Common myeloid progenitor, CD34-positive (primary cell): ENCODE measurements at regions of chr1 and their contacts with region 1.

Region 1: GRCh38 chr1:16618719-16619118 is 5.4 kb upstream of the NBPF1 start:
- DNase-seq: no peak
- H3K4me3 ChIP-seq: no peak overlapping the region
- H3K27ac ChIP-seq: no peak overlapping the region
- H3K4me1 ChIP-seq: peaks cover 0 to 11% (median 10%) of the 10 kb centered on the region in 4 experiments
- H3K27me3 ChIP-seq: no peaks in the 10 kb centered on the region

Region 2: DNA sequence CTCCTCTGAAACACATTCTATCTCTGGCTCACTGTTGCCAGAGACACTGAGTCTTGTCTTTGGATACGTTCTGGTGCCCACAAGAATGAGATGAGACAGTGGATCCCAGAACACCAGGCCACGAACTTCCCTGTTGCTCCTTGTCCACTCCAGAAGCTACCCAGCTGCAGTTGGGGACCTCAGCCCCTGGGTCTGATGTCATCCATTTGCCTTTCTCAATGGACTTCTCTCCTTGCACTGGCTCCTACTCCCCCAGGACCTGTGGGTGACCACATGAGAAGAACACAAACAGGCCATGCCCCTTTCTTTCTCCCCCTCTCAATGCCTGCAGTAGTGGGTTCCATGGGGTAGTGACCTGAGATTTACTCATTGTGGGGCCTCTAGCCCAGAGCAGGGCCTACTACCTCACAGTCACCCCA is 11.3 kb before region 1 on chr1:
- CTCF ChIA-PET with region 1: interaction called, 104 read pairs
- POLR2A ChIA-PET with region 1: no interaction called
- DNase-seq: no peak
- H3K4me3 ChIP-seq: no peak overlapping the region
- H3K27ac ChIP-seq: no peak overlapping the region
- H3K4me1 ChIP-seq: peaks cover 3 to 6% (median 5%) of the 10 kb centered on the region in 4 experiments
- H3K27me3 ChIP-seq: peaks cover 0 to 7% (median 4%) of the 10 kb centered on the region in 5 experiments

Region 3: DNA sequence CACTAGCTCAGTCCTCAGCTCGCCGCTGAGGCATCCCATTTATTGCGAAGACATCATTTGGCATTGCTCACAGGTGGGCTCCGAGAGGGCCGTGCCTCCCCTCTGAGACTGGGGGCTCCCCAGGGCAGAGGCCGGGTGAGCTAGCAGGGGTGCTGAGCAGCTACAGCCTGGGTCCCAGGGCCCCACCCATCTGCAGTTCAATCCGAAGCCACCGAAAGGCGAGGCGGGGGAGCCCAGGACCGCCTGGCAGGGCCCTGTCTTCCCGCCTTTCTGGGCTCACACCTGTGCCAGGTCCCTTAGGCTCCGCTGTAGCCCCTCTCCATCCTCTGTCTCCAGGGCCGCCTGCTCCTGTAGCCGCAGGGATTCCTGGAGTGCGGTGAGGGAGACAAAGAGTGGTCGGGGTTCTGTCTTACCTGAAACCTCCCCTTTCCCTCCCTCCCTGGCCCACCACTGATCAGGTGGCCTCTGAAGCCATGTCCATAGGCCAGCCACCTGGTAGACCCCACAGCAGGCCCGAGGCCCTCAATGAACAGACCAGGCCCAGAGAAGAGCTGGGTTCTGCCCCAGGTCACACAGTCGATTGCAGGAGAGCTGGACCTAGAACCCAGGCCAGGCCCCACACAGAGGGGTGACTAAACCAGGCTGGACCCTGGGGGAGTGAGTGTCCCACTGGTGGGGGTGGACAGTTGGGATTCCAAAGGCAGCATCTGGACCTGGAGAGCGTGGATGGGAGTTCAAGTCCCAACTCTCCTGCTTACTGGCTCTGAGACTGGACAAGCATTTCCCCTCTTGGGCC is 12.7 kb after region 1 on chr1:
- CTCF ChIA-PET with region 1: interaction called, 27 read pairs
- POLR2A ChIA-PET with region 1: no interaction called
- DNase-seq: no peak
- H3K4me3 ChIP-seq: no peak overlapping the region
- H3K27ac ChIP-seq: no peak overlapping the region
- H3K4me1 ChIP-seq: peaks cover 0 to 5% (median 0%) of the 10 kb centered on the region in 4 experiments
- H3K27me3 ChIP-seq: no peaks in the 10 kb centered on the region

Region 4: DNA sequence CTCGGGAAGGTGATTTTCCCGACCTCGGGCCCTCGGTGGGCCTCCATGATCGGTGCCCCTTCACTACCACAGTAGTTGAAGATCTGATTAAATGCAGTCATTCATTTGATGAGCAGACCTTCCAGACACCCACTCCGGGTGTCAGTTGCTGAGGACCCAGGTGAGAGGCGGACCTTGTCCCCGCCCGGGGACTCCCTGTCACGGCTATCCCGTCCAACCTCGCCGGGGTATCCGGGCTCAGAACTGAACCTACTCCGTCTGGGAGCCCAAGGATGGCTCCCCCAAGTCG is 25.4 kb after region 1 on chr1:
- CTCF ChIA-PET with region 1: interaction called, 10 read pairs
- POLR2A ChIA-PET with region 1: no interaction called
- DNase-seq: no peak
- H3K4me3 ChIP-seq: peak overlapping the region; percentile 68 to 100 (median 96)
- H3K27ac ChIP-seq: peak overlapping the region; percentile 81 to 94
- H3K4me1 ChIP-seq: peaks cover 7 to 31% (median 28%) of the 10 kb centered on the region in 4 experiments
- H3K27me3 ChIP-seq: peaks cover 0 to 9% (median 5%) of the 10 kb centered on the region in 5 experiments